PC-3 (cell line): ENCODE measurements at regions of chr14 and their contacts with region 1.

Region 1: DNA sequence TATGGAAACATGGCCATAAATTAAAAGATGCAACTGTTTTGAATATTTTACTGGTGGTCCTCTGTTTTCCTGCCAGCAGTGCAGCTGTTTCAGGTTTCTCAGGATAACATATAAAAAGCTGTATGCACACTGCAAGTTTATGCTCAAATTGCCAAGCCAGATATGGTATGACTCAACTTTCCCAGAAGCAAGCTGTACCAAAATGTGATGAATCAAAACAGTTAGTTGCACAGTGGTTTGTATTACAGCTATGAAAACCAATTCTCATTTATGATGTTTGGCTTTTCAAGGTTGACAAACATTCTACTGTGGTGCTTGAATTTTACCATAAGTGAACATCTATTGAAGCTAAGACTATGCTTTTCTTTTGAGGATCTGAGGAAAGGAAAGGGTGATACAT is 15.5 kb downstream of the TRMT5 start:
- DNase-seq: peak; percentile 66
- ATAC-seq: peak; percentile 92
- H3K4me3 ChIP-seq: no peak overlapping the region
- H3K27ac ChIP-seq: peak overlapping the region; percentile 27
- H3K4me1 ChIP-seq: peaks cover 5% of the 10 kb centered on the region; the same call in 1 of the 2 replicates
- H3K27me3 ChIP-seq: no peaks in the 10 kb centered on the region
- CTCF ChIP-seq: no peak

Region 2: DNA sequence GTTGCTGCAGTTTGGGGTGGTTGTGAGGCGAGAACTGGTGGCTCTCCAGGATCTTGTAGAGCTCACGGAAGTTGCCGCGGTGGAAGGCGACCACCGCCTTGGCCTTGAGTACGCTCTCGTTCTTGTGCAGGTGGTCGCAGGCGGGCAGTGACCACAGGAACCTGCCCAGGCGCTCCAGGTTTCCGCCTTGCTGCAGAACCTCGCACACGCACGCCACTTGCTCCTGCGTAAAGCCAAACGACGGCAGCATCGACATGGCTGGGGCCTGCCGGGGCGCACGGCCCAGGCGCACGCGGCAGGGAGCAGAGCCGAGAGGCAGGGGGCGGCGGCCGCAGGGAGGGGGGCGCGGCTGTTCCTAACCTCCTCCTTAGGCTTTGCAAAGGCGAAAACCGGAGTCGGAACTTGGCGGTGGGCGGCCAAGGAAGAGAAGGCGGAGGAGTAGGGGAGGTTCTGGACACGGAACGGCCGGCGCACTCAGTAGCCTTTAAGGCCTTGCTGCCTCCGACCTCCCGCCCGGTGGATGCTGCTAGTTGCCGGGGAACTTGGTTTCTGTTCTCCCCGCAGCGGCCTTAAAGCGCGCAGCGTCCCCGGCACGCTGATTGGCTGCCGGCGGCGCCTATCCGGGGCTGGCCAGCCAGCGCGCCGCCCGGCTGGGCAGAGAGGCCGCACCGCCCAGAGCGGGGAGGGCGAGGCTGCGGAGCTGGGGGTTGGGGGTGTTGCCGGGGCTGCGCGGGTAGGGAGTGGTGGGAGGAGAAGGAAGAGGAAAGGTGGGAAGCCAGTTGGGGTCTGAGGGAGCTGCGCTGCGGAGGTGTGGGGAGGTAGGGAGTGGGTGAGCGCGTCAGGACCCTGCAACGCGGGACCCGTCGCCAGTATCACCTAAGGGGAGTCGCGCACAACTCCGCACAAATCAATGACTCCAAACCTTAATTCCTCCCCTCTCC is 316.2 kb before region 1 on chr14 and contains the start of gene SIX1:
- CTCF ChIA-PET with region 1: no interaction called
- POLR2A ChIA-PET with region 1: interaction called, 5 read pairs
- intact Hi-C with region 1: loop called (anchors 5 kb)
- DNase-seq: peak; percentile 97
- ATAC-seq: peak; percentile 78
- H3K4me3 ChIP-seq: peak within 1 kb of the TSS; percentile 75
- H3K27ac ChIP-seq: 0 out of 2 replicates have a peak within 1 kb of the TSS, but pooled peaks have one; percentile 6
- H3K4me1 ChIP-seq: peaks cover 21% of the 10 kb centered on the region
- H3K27me3 ChIP-seq: no peaks in the 10 kb centered on the region
- CTCF ChIP-seq: no peak
- total RNA-seq, gene SIX1: 16.5 and 18.2 TPM in 2 replicates

Region 3: GRCh38 chr14:60734465-60735242 is 230.7 kb before region 1 on chr14 and contains the start of gene MNAT1:
- CTCF ChIA-PET with region 1: no interaction called
- POLR2A ChIA-PET with region 1: no interaction called
- intact Hi-C with region 1: loop called (anchors 5 kb)
- DNase-seq: peak; percentile 95
- ATAC-seq: peak; percentile 84
- H3K4me3 ChIP-seq: peak within 1 kb of the TSS; percentile 94
- H3K27ac ChIP-seq: no peak within 1 kb of the TSS
- H3K4me1 ChIP-seq: peaks cover 15% of the 10 kb centered on the region
- H3K27me3 ChIP-seq: no peaks in the 10 kb centered on the region
- CTCF ChIP-seq: no peak
- total RNA-seq, gene MNAT1: 88.6 and 95.7 TPM in 2 replicates